Gastrocnemius medialis (tissue), 4 donors: ENCODE measurements at regions of chr2 and their contacts with region 1.

Region 1: GRCh38 chr2:12733846-12734245 is 17.1 kb downstream of the TRIB2 start:
- DNase-seq: peak; percentile 75 to 89
- ATAC-seq: peak; percentile 86 to 90
- H3K4me3 ChIP-seq: no peak overlapping the region
- H3K27ac ChIP-seq: peak overlapping the region; percentile 61 to 81 (median 68)
- H3K4me1 ChIP-seq: peaks cover 30 to 45% of the 10 kb centered on the region in 2 donors
- H3K27me3 ChIP-seq: no peaks in the 10 kb centered on the region
- CTCF ChIP-seq: no peak
- POLR2A ChIP-seq: no peak

Region 2: DNA sequence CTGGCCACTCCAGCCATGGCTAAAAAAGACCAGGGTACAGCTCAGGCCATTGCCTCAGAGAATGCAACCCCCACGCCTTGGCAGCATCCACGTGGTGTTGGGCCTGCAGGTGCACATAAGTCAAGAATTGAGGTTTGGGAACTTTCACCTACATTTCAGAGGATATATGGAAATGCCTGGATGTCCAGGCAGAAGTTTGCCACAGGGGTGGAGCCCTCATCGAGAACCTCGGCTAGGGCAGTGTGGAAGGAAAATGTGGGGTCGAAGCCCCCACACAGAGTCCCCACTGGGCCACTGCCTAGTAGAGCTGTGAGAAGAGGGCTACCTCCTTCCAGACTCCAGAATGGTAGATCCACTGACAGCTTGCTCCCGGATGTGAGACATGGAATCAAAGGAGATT is 510.1 kb before region 1 on chr2:
- in situ Hi-C with region 1: no loop called
- intact Hi-C with region 1: no loop called
- DNase-seq: no peak
- ATAC-seq: no peak
- H3K4me3 ChIP-seq: no peak overlapping the region
- H3K27ac ChIP-seq: no peak overlapping the region
- H3K4me1 ChIP-seq: no peaks in the 10 kb centered on the region
- H3K27me3 ChIP-seq: no peaks in the 10 kb centered on the region
- CTCF ChIP-seq: no peak
- POLR2A ChIP-seq: no peak

Region 3: DNA sequence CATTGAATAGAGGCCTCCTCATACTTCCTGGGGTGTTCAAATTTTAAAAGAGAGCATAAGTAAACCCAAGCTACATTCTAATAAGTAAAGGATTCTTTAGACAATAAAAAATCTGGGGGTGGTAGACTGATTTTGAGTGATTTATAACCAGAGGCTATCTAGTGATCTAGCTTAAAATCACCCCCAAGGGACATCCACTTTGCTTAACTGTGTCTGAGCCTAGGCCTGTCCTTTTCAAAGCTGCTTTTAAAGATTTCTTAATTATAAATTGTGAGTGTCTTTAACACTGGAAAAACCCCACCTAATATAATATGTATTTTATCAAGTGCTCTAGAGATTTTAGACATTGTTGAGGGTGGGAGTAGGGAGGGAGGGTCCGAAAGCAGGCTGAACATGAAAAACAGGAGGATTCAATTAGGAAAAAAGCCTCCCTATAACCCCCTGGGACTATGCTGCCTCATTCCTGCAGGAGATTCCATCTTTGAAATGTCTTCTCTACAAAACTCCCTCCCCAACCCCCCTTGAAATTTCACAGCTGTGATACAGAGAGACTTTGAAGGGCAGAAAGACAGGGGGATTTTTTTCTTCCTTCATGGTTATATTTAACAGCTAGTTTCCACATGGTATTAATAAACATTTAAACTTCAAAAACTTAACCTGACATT is 40.3 kb after region 1 on chr2:
- in situ Hi-C with region 1: no loop called
- intact Hi-C with region 1: no loop called
- DNase-seq: no peak
- ATAC-seq: no peak
- H3K4me3 ChIP-seq: no peak overlapping the region
- H3K27ac ChIP-seq: peak overlapping the region in 1 of 4 donors; percentile 16
- H3K4me1 ChIP-seq: no peaks in the 10 kb centered on the region
- H3K27me3 ChIP-seq: no peaks in the 10 kb centered on the region
- CTCF ChIP-seq: no peak
- POLR2A ChIP-seq: no peak

Region 4: DNA sequence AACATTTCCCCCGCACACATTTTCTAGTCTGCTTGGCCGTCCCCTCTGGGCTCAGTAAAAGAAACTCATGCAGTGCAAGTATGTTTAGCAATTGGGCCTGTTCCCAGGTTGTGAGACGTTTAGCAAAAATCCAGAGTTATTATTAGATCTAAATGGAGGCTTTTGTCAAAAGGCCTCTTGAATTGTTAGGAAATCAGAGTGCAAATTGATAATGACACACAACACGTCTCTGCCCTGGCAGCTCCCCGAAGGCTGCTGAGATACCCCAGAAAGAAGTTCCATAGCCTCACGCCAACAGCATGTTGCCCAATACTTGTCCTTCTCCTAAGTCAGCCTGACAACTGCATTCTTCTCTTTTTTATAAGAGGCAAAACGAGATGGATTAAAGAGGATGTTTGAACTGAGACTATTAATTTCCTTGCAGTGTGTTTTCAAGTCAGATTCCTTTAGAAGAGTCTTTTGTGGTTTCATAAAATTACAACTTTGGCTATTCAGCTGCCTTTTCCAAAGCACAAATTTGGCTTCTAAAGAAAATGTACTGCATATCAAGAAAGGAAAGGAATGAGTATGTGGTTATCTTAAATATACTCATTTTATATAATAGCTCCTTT is 185.1 kb after region 1 on chr2:
- in situ Hi-C with region 1: no loop called
- intact Hi-C with region 1: loop called (anchors 5 kb)
- DNase-seq: peak; percentile 40 to 69
- ATAC-seq: peak; percentile 75 to 81
- H3K4me3 ChIP-seq: peak overlapping the region in 1 of 4 donors; percentile 7
- H3K27ac ChIP-seq: peak overlapping the region; percentile 33 to 65 (median 44)
- H3K4me1 ChIP-seq: peaks cover 0 to 14% of the 10 kb centered on the region in 2 donors
- H3K27me3 ChIP-seq: no peaks in the 10 kb centered on the region
- CTCF ChIP-seq: no peak
- POLR2A ChIP-seq: no peak